H1 (cell line): ENCODE measurements at regions of chr1 and their contacts with region 1.

Region 1: DNA sequence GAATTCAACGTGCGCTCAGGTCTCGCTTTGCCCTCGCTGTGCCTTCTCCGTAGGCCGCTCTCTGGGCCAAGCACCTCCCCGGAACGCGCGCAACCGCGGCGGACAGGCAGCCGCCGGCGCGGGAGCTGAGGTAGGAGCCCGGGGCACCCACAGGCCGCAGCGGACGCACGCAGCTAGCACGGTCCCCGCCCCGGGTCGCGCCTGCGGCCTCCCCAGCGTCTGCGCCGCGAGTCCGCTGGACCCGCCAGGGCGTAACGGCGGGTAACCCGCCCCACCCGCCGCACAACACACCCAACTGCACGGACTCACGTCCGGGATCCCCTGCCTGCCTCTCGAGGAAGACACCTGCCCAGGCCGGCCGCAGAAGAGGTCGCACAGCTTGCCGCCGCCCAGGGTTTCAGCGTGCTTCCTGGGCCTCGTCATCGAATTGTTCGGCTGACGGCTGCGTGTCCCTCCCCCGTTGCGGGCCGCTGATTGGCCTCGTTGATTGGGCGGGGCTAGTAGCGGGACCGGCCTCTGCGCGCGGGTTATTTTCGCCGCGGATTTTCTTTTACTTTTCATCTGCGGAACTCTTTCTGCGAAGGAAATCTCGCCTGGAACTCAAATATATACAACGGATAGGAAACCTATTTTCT is at the start of gene CLCC1:
- DNase-seq: peak; percentile 70 to 89
- H3K4me3 ChIP-seq: peak within 1 kb of the TSS; percentile 77 to 91 (median 82)
- H3K27ac ChIP-seq: peak within 1 kb of the TSS; percentile 63; the same call in 1 of the 2 replicates
- H3K4me1 ChIP-seq: no peaks in the 10 kb centered on the region; a peak in 2 of 7 replicates
- H3K27me3 ChIP-seq: no peaks in the 10 kb centered on the region
- CTCF ChIP-seq: no peak
- EP300 ChIP-seq: no peak
- POLR2A ChIP-seq: peak in 1 of 2 experiments; percentile 86; a peak in 2 of 3 replicates
- RAD21 ChIP-seq: no peak
- total RNA-seq, gene CLCC1: 20.6 and 23.8 TPM in 2 replicates

Region 2: GRCh38 chr1:108947871-108948525 is 15.2 kb before region 1 on chr1:
- CTCF ChIA-PET with region 1: interaction called, 4 read pairs
- POLR2A ChIA-PET with region 1: interaction called, 13 read pairs
- DNase-seq: no peak
- H3K4me3 ChIP-seq: peak overlapping the region in 1 of 4 experiments; percentile 47; a peak in 3 of 8 replicates
- H3K27ac ChIP-seq: peak overlapping the region; percentile 80
- H3K4me1 ChIP-seq: peaks cover 4 to 12% (median 7%) of the 10 kb centered on the region in 4 experiments; a peak in 5 of 7 replicates
- H3K27me3 ChIP-seq: no peaks in the 10 kb centered on the region
- CTCF ChIP-seq: no peak
- EP300 ChIP-seq: no peak
- POLR2A ChIP-seq: no peak
- RAD21 ChIP-seq: no peak

Region 3: DNA sequence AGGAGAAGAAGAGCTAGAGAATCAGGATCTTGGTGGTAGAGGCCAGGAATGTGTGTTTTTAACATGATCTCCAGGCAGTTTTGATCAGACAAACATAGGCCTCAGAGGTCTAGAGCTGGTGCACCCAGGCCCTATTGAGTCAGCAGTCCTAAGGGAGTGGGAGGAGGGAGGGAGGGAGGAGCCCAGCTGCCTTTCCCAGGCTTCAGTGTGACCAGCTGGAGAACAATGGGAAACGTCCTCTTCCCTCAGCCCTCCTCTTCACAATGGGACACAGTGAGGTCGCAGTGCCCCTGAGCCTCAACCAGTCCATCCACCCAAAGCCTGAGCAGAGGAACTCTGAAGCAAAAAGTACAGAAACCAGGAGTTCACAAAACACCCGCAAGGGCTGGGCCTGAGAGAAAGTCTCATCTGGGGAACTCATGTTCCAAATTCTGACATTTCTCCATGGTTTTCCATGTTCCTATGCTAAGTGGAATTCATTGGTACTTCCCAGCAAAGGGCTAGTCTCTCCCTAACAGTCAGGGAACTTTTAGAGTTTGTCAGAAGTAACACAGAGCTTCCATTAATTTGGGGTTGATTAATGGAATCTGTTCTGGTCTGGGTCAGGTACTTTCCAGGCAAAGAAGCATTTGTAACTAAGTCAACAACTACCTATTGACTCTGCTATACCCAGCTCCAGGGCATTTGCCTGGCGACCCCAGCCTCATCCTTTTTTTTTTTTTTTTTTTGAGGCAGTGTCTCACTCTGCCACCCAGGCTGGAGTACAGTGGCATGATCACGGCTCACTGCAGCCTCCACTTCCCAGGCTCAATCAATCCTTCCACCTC is 188.2 kb after region 1 on chr1:
- CTCF ChIA-PET with region 1: no interaction called
- POLR2A ChIA-PET with region 1: no interaction called
- DNase-seq: peak; percentile 5 to 49
- H3K4me3 ChIP-seq: no peak overlapping the region
- H3K27ac ChIP-seq: no peak overlapping the region
- H3K4me1 ChIP-seq: peaks cover 0 to 3% (median 2%) of the 10 kb centered on the region in 4 experiments; a peak in 3 of 7 replicates
- H3K27me3 ChIP-seq: no peaks in the 10 kb centered on the region
- CTCF ChIP-seq: no peak
- EP300 ChIP-seq: no peak
- POLR2A ChIP-seq: 0 out of 3 replicates have a peak, but pooled peaks of 1 of the 2 experiments have one; percentile 38
- RAD21 ChIP-seq: no peak